OCI-LY7 (cell line): ENCODE measurements at regions of chr12 and their contacts with region 1.

Region 1: GRCh38 chr12:25146686-25147085 is 48.3 kb downstream of the DNAI7 start:
- DNase-seq: no peak
- H3K4me3 ChIP-seq: no peak overlapping the region
- H3K27ac ChIP-seq: no peak overlapping the region
- H3K4me1 ChIP-seq: no peaks in the 10 kb centered on the region
- CTCF ChIP-seq: no peak

Region 2: DNA sequence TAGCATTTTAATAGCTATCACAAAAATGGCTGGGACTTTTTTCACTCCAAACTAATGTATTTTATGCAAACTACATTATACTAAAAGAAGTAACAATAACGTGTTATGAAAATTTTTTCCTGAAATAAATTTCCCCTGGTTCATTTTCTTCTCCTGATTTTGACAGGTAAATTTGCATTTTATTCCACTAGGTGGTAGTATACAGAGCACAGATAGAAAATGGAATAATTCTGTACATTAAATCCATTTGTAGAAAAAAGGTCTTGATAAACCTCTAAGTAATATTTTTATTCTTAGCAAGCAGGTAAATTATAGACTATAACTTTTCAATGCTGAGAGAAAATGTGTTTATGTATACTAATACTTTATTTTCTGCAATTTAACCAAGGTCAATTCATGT is 294.3 kb before region 1 on chr12:
- CTCF ChIA-PET with region 1: no interaction called
- POLR2A ChIA-PET with region 1: no interaction called
- intact Hi-C with region 1: loop called (anchors 5 kb)
- DNase-seq: peak; percentile 12
- H3K4me3 ChIP-seq: no peak overlapping the region
- H3K27ac ChIP-seq: no peak overlapping the region
- H3K4me1 ChIP-seq: peaks cover 8% of the 10 kb centered on the region
- CTCF ChIP-seq: peak; percentile 85

Region 3: GRCh38 chr12:24931666-24932405 is 214.8 kb before region 1 on chr12:
- CTCF ChIA-PET with region 1: no interaction called
- POLR2A ChIA-PET with region 1: no interaction called
- intact Hi-C with region 1: no loop called
- DNase-seq: peak; percentile 87
- H3K4me3 ChIP-seq: peak overlapping the region; percentile 47
- H3K27ac ChIP-seq: peak overlapping the region; percentile 64
- H3K4me1 ChIP-seq: peaks cover 52% of the 10 kb centered on the region
- CTCF ChIP-seq: no peak

Region 4: GRCh38 chr12:25162866-25163265 is 16.2 kb after region 1 on chr12:
- CTCF ChIA-PET with region 1: no interaction called
- POLR2A ChIA-PET with region 1: no interaction called
- intact Hi-C with region 1: no loop called
- DNase-seq: no peak
- H3K4me3 ChIP-seq: no peak overlapping the region
- H3K27ac ChIP-seq: no peak overlapping the region
- H3K4me1 ChIP-seq: peaks cover 8% of the 10 kb centered on the region
- CTCF ChIP-seq: no peak

Region 5: DNA sequence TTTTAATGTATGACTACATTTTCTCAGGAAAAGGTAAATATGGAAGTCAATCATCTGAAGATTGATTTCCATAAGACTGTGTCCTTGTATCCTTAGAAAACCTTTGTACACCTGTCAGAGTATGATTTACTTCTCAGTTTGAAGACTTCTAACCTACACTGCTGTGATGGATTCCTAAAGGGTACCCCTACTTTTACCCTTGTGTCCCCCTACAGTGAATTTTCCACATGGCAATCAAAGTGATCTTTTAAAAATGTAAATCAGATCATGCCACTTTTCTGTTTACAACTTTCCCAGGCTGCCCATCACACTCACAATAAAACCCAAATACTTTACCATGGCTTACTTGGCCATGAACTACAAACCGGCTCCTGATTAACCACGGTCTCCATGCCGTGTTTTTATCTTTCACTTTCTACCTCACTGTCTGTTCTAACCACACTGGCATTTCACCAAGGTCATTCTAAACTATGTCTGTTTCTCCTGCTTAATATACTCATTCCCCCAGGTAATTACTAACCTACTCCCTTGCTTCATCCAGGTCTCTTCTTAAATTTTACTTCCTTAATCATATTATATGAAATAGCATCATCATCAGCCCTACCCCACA is 40.2 kb after region 1 on chr12:
- CTCF ChIA-PET with region 1: no interaction called
- POLR2A ChIA-PET with region 1: no interaction called
- intact Hi-C with region 1: no loop called
- DNase-seq: no peak
- H3K4me3 ChIP-seq: no peak overlapping the region
- H3K27ac ChIP-seq: no peak overlapping the region
- H3K4me1 ChIP-seq: no peaks in the 10 kb centered on the region
- CTCF ChIP-seq: no peak